ENCODE measurements at regions of chr19 and their contacts with region 1.

Region 1: GRCh38 chr19:12139885-12140547 is at the start of gene ZNF20:
- DNase-seq: peak; percentile 97 to 99 (median 98)
- ATAC-seq: peak; percentile 96 to 99 (median 98)
- H3K4me3 ChIP-seq: peak within 1 kb of the TSS; percentile 67 to 77 (median 68)
- H3K27ac ChIP-seq: peak within 1 kb of the TSS; percentile 68 to 90 (median 78)
- H3K4me1 ChIP-seq: peaks cover 0 to 12% (median 6%) of the 10 kb centered on the region in 3 donors
- H3K27me3 ChIP-seq: no peaks in the 10 kb centered on the region
- CTCF ChIP-seq: no peak
- total RNA-seq, gene ZNF20: 0.63 to 3.3 (median 1.4) TPM

Region 2: DNA sequence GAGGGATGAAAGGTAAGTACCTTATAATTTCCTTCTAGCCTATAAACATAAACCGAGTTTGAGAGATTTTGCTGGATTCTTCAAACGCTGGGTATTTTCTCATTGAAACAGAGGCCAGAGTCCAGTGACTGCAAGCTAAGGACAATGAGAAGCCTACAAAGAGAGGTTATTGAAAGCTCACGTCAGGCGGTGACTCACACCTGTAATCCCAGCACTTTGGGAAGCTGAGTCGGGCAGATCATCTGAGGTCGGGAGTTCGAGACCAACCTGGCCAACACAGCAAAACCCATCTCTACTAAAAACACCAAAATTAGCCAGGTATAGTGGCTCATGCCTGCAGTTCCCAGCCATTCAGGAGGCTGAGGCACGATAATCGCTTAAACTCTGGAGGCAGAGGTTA is 267.4 kb before region 1 on chr19:
- intact Hi-C with region 1: loop called in 1 of 3 experiments (anchors 10 kb)
- DNase-seq: no peak
- ATAC-seq: no peak
- H3K4me3 ChIP-seq: no peak overlapping the region
- H3K27ac ChIP-seq: no peak overlapping the region
- H3K4me1 ChIP-seq: no peaks in the 10 kb centered on the region
- H3K27me3 ChIP-seq: no peaks in the 10 kb centered on the region
- CTCF ChIP-seq: no peak

Region 3: DNA sequence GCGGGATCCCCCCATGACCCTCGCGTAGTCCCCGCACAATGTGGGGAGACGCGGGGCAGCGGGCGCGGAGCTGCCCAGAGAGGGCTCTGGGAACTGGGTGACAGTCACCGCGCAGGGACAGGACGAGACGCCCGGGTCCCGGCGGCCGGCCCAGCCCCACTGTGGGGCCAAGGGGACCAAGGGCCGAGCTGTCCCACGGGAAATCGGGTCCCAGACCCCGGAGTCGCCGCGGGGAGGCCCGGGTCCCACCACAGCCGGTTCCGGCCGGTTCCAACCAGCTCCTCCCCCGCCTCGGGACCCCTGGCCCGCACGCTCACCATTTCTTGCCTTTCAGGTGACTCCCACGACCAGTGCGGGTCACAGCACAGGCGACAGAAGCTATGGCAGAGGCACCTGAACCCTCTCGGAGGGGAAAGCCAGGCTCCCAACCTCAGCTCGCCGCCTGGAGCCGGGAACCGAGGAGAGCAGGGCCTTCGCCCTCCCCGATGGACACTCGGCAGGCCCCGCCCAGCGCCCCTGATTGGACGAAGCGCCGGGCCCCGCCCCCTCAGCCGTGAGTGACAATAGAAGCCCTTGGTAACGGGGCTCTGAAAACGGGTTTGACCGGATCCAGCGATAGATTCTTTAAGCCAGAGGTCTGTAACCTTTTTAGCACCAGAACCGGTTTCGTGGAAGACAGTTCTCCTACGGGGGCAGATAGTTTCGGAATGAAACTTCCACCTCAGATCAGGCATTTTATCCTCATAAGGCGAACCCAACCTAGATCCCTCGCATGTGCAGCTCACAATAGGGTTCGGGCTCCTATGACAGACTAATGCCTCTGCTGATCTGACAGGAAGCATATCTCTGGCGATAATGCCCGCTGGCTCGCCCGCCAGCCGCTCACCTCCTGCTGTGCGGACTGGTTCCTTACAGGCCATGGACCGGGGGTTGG is 104.5 kb before region 1 on chr19 and contains the start of gene ZNF433:
- intact Hi-C with region 1: no loop called
- DNase-seq: peak; percentile 98 to 99 (median 98)
- ATAC-seq: peak; percentile 98 to 100 (median 99)
- H3K4me3 ChIP-seq: peak within 1 kb of the TSS; percentile 72 to 91 (median 80)
- H3K27ac ChIP-seq: peak within 1 kb of the TSS; percentile 84 to 96 (median 88)
- H3K4me1 ChIP-seq: peaks cover 0 to 10% (median 6%) of the 10 kb centered on the region in 3 donors
- H3K27me3 ChIP-seq: no peaks in the 10 kb centered on the region
- CTCF ChIP-seq: no peak
- total RNA-seq, gene ZNF433: 3.7 to 6.5 (median 4.4) TPM

Region 4: DNA sequence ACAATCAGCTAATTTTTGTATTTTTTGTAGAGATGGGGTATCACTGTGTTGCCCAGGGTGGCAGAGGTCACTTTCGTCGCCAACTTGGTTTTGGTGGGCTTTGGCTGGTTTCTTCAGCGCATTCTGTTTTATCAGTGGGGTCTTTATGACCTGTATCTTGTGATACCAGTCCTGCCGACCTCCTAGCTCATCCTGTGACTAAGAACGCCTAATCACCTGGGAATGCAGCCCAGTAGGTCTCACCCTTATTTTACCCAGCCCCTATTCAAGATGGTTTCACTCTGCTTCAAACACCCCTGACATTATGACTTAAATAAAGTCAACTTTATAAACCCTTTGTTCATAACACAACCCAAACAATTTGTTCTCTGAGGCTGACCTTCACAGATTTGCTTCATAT is 84.2 kb before region 1 on chr19:
- intact Hi-C with region 1: loop called in 2 of 3 experiments (anchors 5 kb)
- DNase-seq: no peak
- ATAC-seq: no peak
- H3K4me3 ChIP-seq: no peak overlapping the region
- H3K27ac ChIP-seq: no peak overlapping the region
- H3K4me1 ChIP-seq: peaks cover 0 to 4% (median 4%) of the 10 kb centered on the region in 3 donors
- H3K27me3 ChIP-seq: no peaks in the 10 kb centered on the region
- CTCF ChIP-seq: no peak

Region 5: DNA sequence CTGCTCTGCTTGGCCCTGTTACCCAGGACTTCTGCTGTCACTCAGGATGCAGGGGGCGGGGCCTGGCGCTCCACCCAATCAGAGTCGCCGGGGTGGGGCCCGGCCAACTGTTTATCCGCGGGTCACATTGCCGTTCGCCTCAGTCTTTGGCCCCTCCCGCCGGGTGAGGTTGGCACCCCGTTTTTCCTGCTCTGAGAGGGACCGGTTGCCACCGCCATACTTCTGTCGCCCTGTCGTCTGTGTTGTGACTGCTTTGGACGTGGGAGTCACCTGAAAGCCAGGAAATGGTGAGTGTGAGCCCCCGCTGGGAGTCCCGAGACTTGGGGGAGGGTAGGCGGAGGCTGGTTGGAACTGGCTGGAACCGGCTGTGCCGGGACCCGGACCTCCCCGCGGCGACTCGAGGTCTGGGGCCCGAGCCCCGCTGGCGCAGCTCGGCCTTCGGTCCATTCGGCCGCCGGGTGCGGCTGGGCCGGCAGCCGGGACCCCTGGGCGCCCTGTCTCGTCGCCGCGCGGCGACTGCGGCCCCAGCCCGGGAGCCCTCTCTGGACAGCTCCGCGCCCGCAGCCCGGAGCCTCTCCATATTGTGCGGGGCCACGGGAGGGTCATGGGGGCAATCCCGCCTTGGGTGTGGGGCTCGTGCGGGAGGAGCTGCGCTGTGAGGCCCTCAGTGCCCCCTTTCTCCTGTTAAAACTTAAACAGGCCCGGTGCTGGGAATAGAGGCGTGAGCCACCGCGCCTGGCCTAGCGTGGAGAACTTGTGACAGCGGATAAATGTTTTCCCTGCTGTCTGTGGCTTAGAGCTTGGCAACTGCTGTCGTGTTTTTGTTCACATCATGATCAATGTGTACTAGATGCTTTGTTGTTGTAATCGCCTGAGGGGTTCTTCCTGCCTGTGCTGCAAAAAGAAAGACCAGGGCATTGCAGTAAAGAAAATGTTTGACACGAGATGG is 75.2 kb before region 1 on chr19 and contains the start of gene ZNF844:
- intact Hi-C with region 1: loop called in 1 of 3 experiments (anchors 5 kb)
- DNase-seq: peak; percentile 95 to 98 (median 98)
- ATAC-seq: peak; percentile 94 to 99 (median 96)
- H3K4me3 ChIP-seq: peak within 1 kb of the TSS; percentile 52 to 88 (median 72)
- H3K27ac ChIP-seq: peak within 1 kb of the TSS; percentile 68 to 98 (median 89)
- H3K4me1 ChIP-seq: peaks cover 3 to 11% (median 4%) of the 10 kb centered on the region in 3 donors
- H3K27me3 ChIP-seq: no peaks in the 10 kb centered on the region
- CTCF ChIP-seq: no peak
- total RNA-seq, gene ZNF844: 4.4 to 12.4 (median 5.7) TPM